Activated CD4-positive, alpha-beta memory T cell treated with anti-CD3 and anti-CD28 coated beads, Interleukin-2, amount 10 ng/mL, durations not matched to agents 7 days and 5 days (primary cell): ENCODE measurements at regions of chr12 and their contacts with region 1.

Region 1: DNA sequence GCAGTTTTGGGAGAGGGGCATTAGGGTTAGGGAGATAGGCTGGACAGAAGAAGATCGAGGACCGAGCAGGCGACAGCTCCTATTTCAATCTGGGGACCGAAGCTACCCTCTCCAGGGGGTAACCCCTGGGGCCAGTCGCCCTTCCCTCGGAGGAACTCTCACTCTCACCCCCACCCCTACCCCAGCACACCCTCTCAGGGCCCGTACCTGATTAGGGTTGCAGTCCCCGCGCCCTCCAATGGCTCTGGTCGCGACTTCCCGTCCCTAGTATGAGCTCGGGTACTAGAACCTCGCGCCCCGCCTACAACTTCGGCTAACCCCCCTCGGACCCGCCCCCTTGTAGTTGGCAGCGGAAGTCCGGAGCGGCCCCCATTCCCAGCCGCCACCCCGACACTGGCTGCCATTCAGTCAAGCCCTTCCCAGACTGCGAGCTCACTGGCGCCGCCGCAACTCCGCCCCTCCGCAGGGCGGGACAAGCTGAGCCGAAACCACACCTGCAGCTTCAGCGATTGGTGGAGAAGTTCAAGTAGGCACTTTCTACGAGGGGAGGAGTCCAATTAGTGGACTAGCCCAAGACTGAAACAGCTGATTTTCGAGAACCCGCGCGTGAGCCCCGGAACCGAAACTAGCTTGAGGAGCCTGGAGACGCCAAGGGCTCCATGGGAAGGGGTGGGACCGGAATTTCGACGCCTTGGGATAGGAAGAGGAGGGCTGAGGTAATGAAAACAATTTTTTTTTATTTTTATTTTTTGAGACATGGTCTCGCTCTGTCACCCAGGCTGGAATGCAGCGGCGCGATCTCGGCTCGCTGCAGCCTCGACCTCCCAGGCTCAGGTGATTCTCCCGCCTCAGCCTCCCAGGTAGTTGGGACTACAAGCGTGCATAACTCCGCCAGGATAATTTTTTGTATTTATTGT is at the start of gene STAT2:
- DNase-seq: peak; percentile 100
- H3K4me3 Mint-ChIP-seq: peak within 1 kb of the TSS; percentile 93
- H3K27ac Mint-ChIP-seq: peak within 1 kb of the TSS; percentile 90
- H3K4me1 Mint-ChIP-seq: peaks cover 28% of the 10 kb centered on the region
- H3K27me3 Mint-ChIP-seq: no peaks in the 10 kb centered on the region
- total RNA-seq, gene STAT2: 298 to 304 TPM

Region 2: DNA sequence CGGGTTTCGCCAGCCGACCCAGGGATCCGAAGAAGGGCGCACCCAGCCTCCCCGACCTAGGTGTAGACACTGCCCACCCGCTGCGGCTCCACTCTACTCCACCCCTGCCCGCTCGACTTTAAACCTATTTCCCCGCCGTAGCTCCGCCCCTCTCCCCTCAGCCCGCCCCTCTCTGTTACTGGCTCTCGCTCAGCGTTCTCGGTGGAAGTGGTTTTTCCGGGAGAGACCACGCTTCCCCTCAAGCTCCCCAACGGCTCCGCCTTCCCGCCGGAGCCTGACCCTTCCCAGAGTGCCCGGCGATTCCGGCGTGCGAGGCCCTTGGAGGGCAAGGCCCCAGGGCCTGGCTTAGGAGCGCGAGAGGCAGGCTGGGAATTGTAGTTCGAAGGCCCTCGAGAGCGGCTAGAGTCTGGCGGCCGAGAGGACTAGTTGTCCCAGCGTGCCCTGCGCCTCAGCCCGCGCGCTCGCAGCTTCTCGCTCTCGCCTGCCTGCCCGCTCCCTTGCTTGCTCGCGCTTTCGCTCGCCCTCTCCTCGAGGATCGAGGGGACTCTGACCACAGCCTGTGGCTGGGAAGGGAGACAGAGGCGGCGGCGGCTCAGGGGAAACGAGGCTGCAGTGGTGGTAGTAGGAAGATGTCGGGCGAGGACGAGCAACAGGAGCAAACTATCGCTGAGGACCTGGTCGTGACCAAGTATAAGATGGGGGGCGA is 255.8 kb before region 1 on chr12 and contains the start of gene PA2G4:
- CTCF ChIA-PET with region 1: interaction called, 6 read pairs
- POLR2A ChIA-PET with region 1: interaction called, 16 read pairs
- DNase-seq: peak; percentile 99
- H3K4me3 Mint-ChIP-seq: peak within 1 kb of the TSS; percentile 99
- H3K27ac Mint-ChIP-seq: peak within 1 kb of the TSS; percentile 98
- H3K4me1 Mint-ChIP-seq: peaks cover 53% of the 10 kb centered on the region
- H3K27me3 Mint-ChIP-seq: no peaks in the 10 kb centered on the region
- total RNA-seq, gene PA2G4: 242 to 243 TPM

Region 3: GRCh38 chr12:56224102-56224701 is 135.9 kb before region 1 on chr12 and contains the start of gene NABP2:
- CTCF ChIA-PET with region 1: interaction called, 4 read pairs
- POLR2A ChIA-PET with region 1: interaction called, 13 read pairs
- DNase-seq: peak; percentile 95
- H3K4me3 Mint-ChIP-seq: peak within 1 kb of the TSS; percentile 89
- H3K27ac Mint-ChIP-seq: peak within 1 kb of the TSS; percentile 76
- H3K4me1 Mint-ChIP-seq: peaks cover 53% of the 10 kb centered on the region
- H3K27me3 Mint-ChIP-seq: no peaks in the 10 kb centered on the region
- total RNA-seq, gene NABP2: 49.6 to 52.3 TPM

Region 4: DNA sequence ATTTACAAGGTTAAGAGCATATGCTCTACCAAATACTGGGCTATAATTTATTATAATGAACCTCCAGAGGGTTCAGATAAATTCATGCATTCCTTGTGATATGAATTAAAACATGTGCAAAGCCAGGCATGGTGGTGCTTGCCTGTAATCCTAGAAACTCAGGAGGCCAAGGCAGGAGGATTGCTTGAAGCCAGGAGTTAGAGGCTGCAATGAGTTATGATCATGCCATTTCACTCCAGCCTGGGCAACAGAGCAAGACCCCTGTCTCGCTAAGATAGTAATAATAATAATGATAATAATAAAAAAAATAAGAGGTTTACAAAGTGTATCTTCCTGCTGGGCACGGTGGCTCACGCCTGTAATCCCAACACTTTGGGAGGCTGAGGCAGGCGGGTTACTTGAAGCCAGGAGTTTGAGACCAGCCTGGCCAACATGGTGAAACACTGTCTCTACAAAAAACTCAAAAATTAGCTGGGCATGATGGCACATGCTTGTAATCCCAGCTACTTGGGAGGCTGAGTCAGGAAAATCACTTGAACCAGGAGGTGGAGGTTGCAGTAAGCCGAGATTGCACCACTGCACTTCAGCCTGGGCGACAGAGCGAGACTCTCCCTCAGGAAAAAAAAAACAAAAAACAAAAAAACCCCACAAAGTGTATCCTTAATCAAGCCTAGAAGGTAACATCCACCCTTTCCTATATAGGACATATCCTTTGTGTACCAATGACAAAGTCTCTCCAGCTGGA is 52.7 kb before region 1 on chr12:
- CTCF ChIA-PET with region 1: interaction called, 3 read pairs
- POLR2A ChIA-PET with region 1: interaction called, 16 read pairs
- DNase-seq: no peak
- H3K4me3 Mint-ChIP-seq: no peak overlapping the region
- H3K27ac Mint-ChIP-seq: no peak overlapping the region
- H3K4me1 Mint-ChIP-seq: peaks cover under 1% of the 10 kb centered on the region
- H3K27me3 Mint-ChIP-seq: no peaks in the 10 kb centered on the region

Region 5: GRCh38 chr12:56333679-56334489 is 26.2 kb before region 1 on chr12 and contains the start of gene PAN2:
- CTCF ChIA-PET with region 1: interaction called, 23 read pairs
- POLR2A ChIA-PET with region 1: interaction called, 113 read pairs
- DNase-seq: peak; percentile 95
- H3K4me3 Mint-ChIP-seq: peak within 1 kb of the TSS; percentile 93
- H3K27ac Mint-ChIP-seq: peak within 1 kb of the TSS; percentile 99
- H3K4me1 Mint-ChIP-seq: peaks cover 46% of the 10 kb centered on the region
- H3K27me3 Mint-ChIP-seq: no peaks in the 10 kb centered on the region
- total RNA-seq, gene PAN2: 61.3 to 64.2 TPM

Region 6: GRCh38 chr12:56375598-56376434 is 15.7 kb after region 1 on chr12:
- CTCF ChIA-PET with region 1: interaction called, 4 read pairs
- POLR2A ChIA-PET with region 1: interaction called, 12 read pairs
- DNase-seq: no peak
- H3K4me3 Mint-ChIP-seq: no peak overlapping the region
- H3K27ac Mint-ChIP-seq: no peak overlapping the region
- H3K4me1 Mint-ChIP-seq: no peaks in the 10 kb centered on the region
- H3K27me3 Mint-ChIP-seq: peaks cover 7% of the 10 kb centered on the region

Region 7: GRCh38 chr12:56391721-56392120 is 31.6 kb after region 1 on chr12:
- CTCF ChIA-PET with region 1: no interaction called
- POLR2A ChIA-PET with region 1: no interaction called
- DNase-seq: no peak
- H3K4me3 Mint-ChIP-seq: no peak overlapping the region
- H3K27ac Mint-ChIP-seq: no peak overlapping the region
- H3K4me1 Mint-ChIP-seq: no peaks in the 10 kb centered on the region
- H3K27me3 Mint-ChIP-seq: peaks cover 2% of the 10 kb centered on the region

Region 8: GRCh38 chr12:56468216-56469006 is 108.3 kb after region 1 on chr12 and contains the start of gene SPRYD4:
- CTCF ChIA-PET with region 1: interaction called, 41 read pairs
- POLR2A ChIA-PET with region 1: interaction called, 15 read pairs
- DNase-seq: peak; percentile 96
- H3K4me3 Mint-ChIP-seq: peak within 1 kb of the TSS; percentile 94
- H3K27ac Mint-ChIP-seq: peak within 1 kb of the TSS; percentile 94
- H3K4me1 Mint-ChIP-seq: peaks cover 29% of the 10 kb centered on the region
- H3K27me3 Mint-ChIP-seq: no peaks in the 10 kb centered on the region
- total RNA-seq, gene SPRYD4: 2.9 to 3.1 TPM